OCI-LY7 (cell line): ENCODE measurements at regions of chr2 and their contacts with region 1.

Region 1: DNA sequence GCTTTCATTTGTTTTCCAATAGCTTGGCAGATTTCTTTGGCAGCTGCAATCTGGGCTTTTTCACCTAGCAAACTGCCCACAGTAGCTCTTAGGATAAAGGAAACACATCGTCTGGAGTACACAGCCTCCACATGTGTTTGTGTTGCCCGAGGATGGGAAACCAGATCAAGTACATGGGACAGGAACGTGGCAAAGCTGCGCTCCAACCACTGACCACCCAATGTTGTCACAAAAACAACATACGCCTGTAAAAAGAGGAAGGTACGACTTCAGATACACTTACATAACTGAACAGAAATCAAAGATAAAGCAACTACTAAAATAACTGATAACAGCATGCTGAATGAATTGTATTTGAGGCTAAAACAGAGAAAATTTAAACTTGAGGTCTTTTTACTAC is 15.5 kb downstream of the HEATR5B start:
- DNase-seq: no peak
- H3K4me3 ChIP-seq: no peak overlapping the region
- H3K27ac ChIP-seq: no peak overlapping the region
- H3K4me1 ChIP-seq: no peaks in the 10 kb centered on the region
- CTCF ChIP-seq: no peak

Region 2: GRCh38 chr2:36835125-36835524 is 233.6 kb before region 1 on chr2:
- CTCF ChIA-PET with region 1: interaction called, 10 read pairs
- POLR2A ChIA-PET with region 1: no interaction called
- intact Hi-C with region 1: no loop called
- DNase-seq: no peak
- H3K4me3 ChIP-seq: no peak overlapping the region
- H3K27ac ChIP-seq: no peak overlapping the region
- H3K4me1 ChIP-seq: no peaks in the 10 kb centered on the region
- CTCF ChIP-seq: no peak

Region 3: GRCh38 chr2:37037771-37038170 is 30.9 kb before region 1 on chr2:
- CTCF ChIA-PET with region 1: no interaction called
- POLR2A ChIA-PET with region 1: no interaction called
- intact Hi-C with region 1: no loop called
- DNase-seq: no peak
- H3K4me3 ChIP-seq: no peak overlapping the region
- H3K27ac ChIP-seq: no peak overlapping the region
- H3K4me1 ChIP-seq: no peaks in the 10 kb centered on the region
- CTCF ChIP-seq: no peak